Sigmoid colon (tissue), 7 donors: ENCODE measurements at regions of chr2 and their contacts with region 1.

Region 1: GRCh38 chr2:10122386-10123280 is at the start of gene RRM2:
- DNase-seq: peak; percentile 97
- H3K4me3 ChIP-seq: peak within 1 kb of the TSS; percentile 13 to 63 (median 54)
- H3K27ac ChIP-seq: no peak within 1 kb of the TSS
- H3K4me1 ChIP-seq: peaks cover 0 to 33% (median 25%) of the 10 kb centered on the region in 4 donors
- H3K27me3 ChIP-seq: peaks cover 13 to 20% (median 18%) of the 10 kb centered on the region in 3 donors
- CTCF ChIP-seq: no peak
- EP300 ChIP-seq: no peak
- POLR2A ChIP-seq: no peak
- total RNA-seq, gene RRM2: 0.16 to 4.3 (median 2.7) TPM in 3 of 4 donors, not detected in the other

Region 2: DNA sequence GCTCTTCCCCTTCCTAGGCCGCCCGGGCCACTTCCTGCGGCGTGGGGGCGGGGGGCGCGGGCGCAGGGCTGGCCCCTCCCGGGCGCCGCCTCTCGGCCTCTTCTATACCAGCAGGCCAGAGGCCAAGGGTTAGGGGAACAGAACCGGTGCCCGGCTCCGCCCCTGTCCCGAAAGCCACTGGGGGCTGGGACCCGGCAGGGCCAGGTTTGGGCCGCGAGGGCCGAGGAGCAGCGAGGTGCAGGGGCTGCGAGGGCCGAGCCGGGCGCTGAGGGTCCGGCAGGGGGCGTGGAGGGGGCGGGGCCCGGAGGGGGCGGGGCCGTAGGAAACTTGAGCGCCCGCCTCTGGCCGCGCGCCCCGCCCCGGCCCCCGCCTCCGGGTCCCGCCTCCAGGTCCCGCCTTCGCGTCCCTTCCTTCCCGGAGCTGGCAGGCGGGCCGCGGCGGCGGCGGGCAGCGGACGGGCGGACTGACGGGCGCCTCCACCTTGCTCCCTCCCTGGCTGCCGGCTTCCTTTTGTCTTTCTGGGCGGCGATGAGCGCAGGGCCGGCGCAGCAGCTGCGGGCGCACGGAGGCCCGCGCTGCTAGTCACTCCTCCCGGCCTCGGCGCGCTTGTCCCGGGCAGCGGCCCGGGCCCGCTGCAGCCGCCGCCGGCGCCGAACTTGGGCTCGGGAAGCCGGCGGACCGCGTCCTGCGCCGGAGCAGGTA is 180.0 kb after region 1 on chr2 and contains the start of gene HPCAL1:
- intact Hi-C with region 1: loop called (anchors 5 kb)
- DNase-seq: peak; percentile 93
- H3K4me3 ChIP-seq: peak within 1 kb of the TSS; percentile 56 to 91 (median 76)
- H3K27ac ChIP-seq: peak within 1 kb of the TSS; percentile 78 to 87 (median 84)
- H3K4me1 ChIP-seq: peaks cover 0 to 41% (median 27%) of the 10 kb centered on the region in 4 donors
- H3K27me3 ChIP-seq: no peaks in the 10 kb centered on the region
- CTCF ChIP-seq: peak in 3 of 4 experiments; percentile 8 to 59 (median 44)
- EP300 ChIP-seq: no peak
- POLR2A ChIP-seq: peak; percentile 34 to 58
- total RNA-seq, gene HPCAL1: 27.7 to 46.0 (median 34.2) TPM

Region 3: GRCh38 chr2:10668402-10669012 is 545.9 kb after region 1 on chr2:
- intact Hi-C with region 1: loop called (anchors 5 kb)
- DNase-seq: no peak
- H3K4me3 ChIP-seq: no peak overlapping the region
- H3K27ac ChIP-seq: no peak overlapping the region
- H3K4me1 ChIP-seq: no peaks in the 10 kb centered on the region
- H3K27me3 ChIP-seq: no peaks in the 10 kb centered on the region
- CTCF ChIP-seq: peak; percentile 32 to 62 (median 49)
- EP300 ChIP-seq: no peak
- POLR2A ChIP-seq: no peak